ENCODE measurements at regions of chr16 and their contacts with region 1.

Region 1: GRCh38 chr16:10579965-10580882 is at the start of gene EMP2:
- DNase-seq: peak; percentile 80
- H3K4me3 ChIP-seq: peak within 1 kb of the TSS; percentile 88 to 91 (median 89)
- H3K27ac ChIP-seq: peak within 1 kb of the TSS; percentile 76
- H3K4me1 ChIP-seq: peaks cover 32% of the 10 kb centered on the region
- H3K27me3 ChIP-seq: no peaks in the 10 kb centered on the region
- CTCF ChIP-seq: peak; percentile 43 to 79
- total RNA-seq, gene EMP2: 18.8 to 33.3 TPM

Region 2: DNA sequence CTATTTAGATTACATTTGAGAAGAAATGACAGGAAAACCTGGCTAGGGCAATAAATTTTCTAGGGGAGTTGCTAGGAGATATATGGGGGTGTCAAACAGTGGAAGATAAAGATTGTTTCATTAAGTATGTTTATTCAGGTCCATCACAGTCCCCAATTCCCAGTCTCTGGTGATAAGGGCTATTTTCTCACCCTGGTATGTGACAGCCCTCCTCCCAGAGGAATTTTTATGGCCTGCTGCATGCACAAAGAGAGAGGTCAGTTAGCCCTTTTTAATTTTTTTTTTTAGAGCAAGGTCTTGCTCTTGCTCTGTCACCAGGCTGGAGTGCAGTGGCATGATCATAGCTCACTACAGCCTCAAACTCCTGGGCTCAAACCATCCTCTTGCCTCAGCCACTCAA is 248.0 kb before region 1 on chr16:
- CTCF ChIA-PET with region 1: no interaction called
- dilution Hi-C with region 1: no loop called
- in situ Hi-C with region 1: no loop called
- intact Hi-C with region 1: no loop called
- DNase-seq: no peak
- H3K4me3 ChIP-seq: no peak overlapping the region
- H3K27ac ChIP-seq: no peak overlapping the region
- H3K4me1 ChIP-seq: no peaks in the 10 kb centered on the region
- H3K27me3 ChIP-seq: no peaks in the 10 kb centered on the region
- CTCF ChIP-seq: no peak

Region 3: GRCh38 chr16:10521681-10522274 is 58.4 kb before region 1 on chr16:
- CTCF ChIA-PET with region 1: no interaction called
- dilution Hi-C with region 1: no loop called
- in situ Hi-C with region 1: no loop called
- intact Hi-C with region 1: loop called (anchors 2 kb)
- DNase-seq: peak; percentile 45
- H3K4me3 ChIP-seq: no peak overlapping the region
- H3K27ac ChIP-seq: no peak overlapping the region
- H3K4me1 ChIP-seq: no peaks in the 10 kb centered on the region
- H3K27me3 ChIP-seq: no peaks in the 10 kb centered on the region
- CTCF ChIP-seq: peak; percentile 92 to 95

Region 4: GRCh38 chr16:10616730-10617555 is 36.7 kb after region 1 on chr16:
- CTCF ChIA-PET with region 1: interaction called, 3 read pairs
- dilution Hi-C with region 1: no loop called
- in situ Hi-C with region 1: no loop called
- intact Hi-C with region 1: loop called (anchors 2 kb)
- DNase-seq: peak; percentile 85
- H3K4me3 ChIP-seq: peak overlapping the region in 2 of 3 experiments; percentile 16 to 26
- H3K27ac ChIP-seq: peak overlapping the region; percentile 79
- H3K4me1 ChIP-seq: peaks cover 42% of the 10 kb centered on the region
- H3K27me3 ChIP-seq: no peaks in the 10 kb centered on the region
- CTCF ChIP-seq: peak; percentile 20 to 36

Region 5: DNA sequence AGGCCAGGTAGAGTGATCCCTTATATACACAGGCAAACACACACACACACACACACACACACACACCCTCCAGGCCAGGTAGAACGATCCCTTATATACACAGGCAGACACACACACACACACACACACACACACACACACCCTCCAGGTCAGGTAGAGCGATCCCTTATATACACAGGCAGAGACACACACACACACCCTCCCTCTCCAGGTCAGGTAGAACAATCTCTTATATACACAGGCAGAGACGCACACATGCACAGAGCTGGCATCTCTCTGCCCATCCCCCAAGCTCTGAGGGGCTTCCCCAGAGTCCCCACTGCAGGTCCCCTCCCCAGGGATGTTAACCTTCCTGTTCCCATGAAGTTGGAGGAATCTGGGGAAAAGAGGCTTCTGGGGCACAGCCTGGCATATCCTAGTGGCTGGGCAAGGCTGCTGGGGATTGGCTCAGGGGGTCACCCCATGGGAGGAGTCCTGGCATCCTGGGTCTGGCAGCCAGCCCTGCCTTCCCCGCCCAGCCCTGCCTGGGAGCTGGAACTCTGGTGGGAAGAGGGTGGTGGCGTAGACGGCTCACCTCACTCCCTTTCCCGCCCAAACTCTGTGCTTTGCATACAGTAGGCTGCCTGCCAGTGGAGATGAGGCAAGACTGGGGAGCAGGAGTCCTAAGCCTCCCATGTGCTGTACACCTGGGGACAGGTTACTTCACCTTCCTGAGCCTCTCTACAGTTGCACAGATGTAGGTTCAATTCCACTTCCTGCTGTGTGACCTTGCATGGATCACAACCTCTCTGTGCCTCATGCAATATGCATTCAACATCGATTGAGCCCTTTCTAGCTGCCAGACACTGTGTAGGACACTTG is 72.7 kb after region 1 on chr16:
- CTCF ChIA-PET with region 1: interaction called, 6 read pairs
- dilution Hi-C with region 1: loop called (anchors 5 kb)
- in situ Hi-C with region 1: no loop called
- intact Hi-C with region 1: loop called (anchors 2 kb)
- DNase-seq: peak; percentile 89
- H3K4me3 ChIP-seq: peak overlapping the region; percentile 6 to 41 (median 30)
- H3K27ac ChIP-seq: peak overlapping the region; percentile 65
- H3K4me1 ChIP-seq: peaks cover 16% of the 10 kb centered on the region
- H3K27me3 ChIP-seq: no peaks in the 10 kb centered on the region
- CTCF ChIP-seq: no peak

Region 6: DNA sequence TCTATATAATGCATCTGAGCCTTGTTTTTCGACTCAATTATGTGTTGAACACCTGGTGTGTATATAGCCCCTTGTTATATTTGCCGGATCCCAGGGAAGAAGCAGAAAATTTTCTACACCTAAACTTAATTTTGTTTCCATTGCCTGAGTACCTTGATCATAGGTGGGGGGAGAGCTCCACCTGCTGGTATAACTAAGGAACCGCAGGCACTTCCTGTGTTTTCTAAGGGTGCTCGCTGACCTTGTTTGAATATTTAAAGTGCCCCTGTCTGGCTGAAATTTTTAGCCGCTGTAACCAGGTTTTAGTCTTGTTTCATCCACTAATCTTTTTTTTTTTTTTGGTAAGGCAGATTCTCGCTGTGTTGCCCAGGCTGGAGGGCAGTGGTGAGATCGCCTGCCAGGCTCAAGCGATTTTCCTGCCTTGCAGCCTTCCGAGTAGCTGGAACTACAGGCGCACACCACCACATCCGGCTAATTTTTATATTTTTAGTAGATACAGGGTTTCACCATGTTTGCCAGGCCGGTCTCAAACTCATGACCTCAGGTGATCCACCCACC is 156.9 kb after region 1 on chr16:
- CTCF ChIA-PET with region 1: no interaction called
- dilution Hi-C with region 1: no loop called
- in situ Hi-C with region 1: no loop called
- intact Hi-C with region 1: loop called (anchors 5 kb)
- DNase-seq: peak; percentile 50
- H3K4me3 ChIP-seq: no peak overlapping the region
- H3K27ac ChIP-seq: no peak overlapping the region
- H3K4me1 ChIP-seq: peaks cover 8% of the 10 kb centered on the region
- H3K27me3 ChIP-seq: no peaks in the 10 kb centered on the region
- CTCF ChIP-seq: peak; percentile 85 to 90

Region 7: GRCh38 chr16:10918294-10919002 is 338.2 kb after region 1 on chr16:
- CTCF ChIA-PET with region 1: no interaction called
- dilution Hi-C with region 1: no loop called
- in situ Hi-C with region 1: no loop called
- intact Hi-C with region 1: loop called (anchors 5 kb)
- DNase-seq: peak; percentile 77
- H3K4me3 ChIP-seq: no peak overlapping the region
- H3K27ac ChIP-seq: no peak overlapping the region
- H3K4me1 ChIP-seq: peaks cover 7% of the 10 kb centered on the region
- H3K27me3 ChIP-seq: no peaks in the 10 kb centered on the region
- CTCF ChIP-seq: peak; percentile 98 to 99

Region 8: GRCh38 chr16:10944249-10945064 is 364.2 kb after region 1 on chr16 and contains the start of gene CLEC16A:
- CTCF ChIA-PET with region 1: no interaction called
- dilution Hi-C with region 1: no loop called
- in situ Hi-C with region 1: no loop called
- intact Hi-C with region 1: loop called (anchors 1 kb)
- DNase-seq: peak; percentile 95
- H3K4me3 ChIP-seq: peak within 1 kb of the TSS; percentile 82 to 92 (median 89)
- H3K27ac ChIP-seq: peak within 1 kb of the TSS; percentile 54
- H3K4me1 ChIP-seq: peaks cover 61% of the 10 kb centered on the region
- H3K27me3 ChIP-seq: no peaks in the 10 kb centered on the region
- CTCF ChIP-seq: no peak
- total RNA-seq, gene CLEC16A: 36.4 to 46.3 TPM

Measured in mammary epithelial cell (primary cell).